ENCODE measurements at regions of chr15 and their contacts with region 1.

Region 1: DNA sequence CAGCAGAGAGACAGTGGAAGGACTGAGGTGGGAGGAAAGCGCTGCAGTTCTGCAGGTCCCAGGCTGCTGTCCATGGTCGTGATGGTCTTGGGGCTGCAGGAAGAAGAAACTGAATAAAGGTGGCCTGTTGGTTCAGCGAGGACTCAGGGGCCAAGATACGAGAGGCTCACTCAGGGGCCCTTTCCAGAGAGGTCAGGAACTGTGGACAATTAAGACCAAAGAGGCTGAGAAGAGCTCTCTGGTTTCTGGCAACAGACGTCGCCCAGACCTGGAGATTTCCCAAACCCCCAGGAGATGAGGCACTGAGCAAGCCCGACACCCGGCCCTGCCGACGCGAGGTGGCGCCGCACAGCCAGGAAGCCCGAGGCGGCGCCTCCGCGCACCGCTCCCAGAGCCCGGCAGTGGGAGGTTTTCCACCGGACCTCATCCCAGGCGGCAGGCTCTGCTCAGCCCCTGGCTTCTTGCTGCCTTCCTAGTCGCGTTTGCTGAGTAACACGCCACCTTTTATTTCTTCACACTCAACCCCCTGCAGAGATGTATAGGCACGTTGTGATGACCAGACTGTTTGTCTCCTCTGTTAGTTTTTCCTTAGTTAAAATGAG is 56.4 kb upstream of the ARRDC4 start:
- DNase-seq: peak; percentile 62 to 87 (median 85)
- ATAC-seq: peak; percentile 97
- H3K4me3 ChIP-seq: no peak overlapping the region
- H3K4me1 ChIP-seq: peaks cover 6% of the 10 kb centered on the region
- CTCF ChIP-seq: peak; percentile 59

Region 2: DNA sequence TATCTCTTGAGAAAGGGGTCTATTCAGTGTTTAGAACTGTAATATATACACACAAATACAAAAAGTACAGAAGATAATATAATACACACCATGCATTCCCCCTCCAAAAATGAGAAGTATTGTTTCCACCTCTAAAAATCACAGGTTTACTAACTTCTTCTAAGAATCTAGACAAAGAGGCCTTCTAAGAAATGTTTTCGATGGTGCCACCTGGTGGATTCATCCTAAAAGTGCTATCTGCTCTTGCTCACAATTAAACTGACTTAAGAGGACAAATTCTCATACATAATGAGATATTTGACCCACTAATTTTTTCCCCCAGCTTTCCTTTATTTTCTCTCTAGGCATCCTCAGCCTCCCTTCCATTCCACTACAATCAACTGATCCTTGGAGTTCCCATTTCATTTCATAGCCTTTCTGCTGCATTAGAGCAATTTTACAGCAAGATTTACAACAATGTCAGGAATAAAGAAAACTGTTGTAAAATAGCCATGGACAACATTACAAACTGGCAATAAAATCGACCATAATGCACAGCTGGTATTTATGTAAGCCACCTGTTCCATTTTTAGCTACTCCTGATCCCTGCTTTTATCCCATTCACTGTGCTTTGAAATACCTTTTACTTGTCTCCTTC is 181.0 kb after region 1 on chr15:
- intact Hi-C with region 1: loop called (anchors 2 to 5 kb)
- DNase-seq: peak in 1 of 3 donors; percentile 72
- ATAC-seq: peak; percentile 47
- H3K4me3 ChIP-seq: no peak overlapping the region
- H3K4me1 ChIP-seq: no peaks in the 10 kb centered on the region
- CTCF ChIP-seq: no peak